Sigmoid colon (tissue), 7 donors: ENCODE measurements at regions of chr16 and their contacts with region 1.

Region 1: DNA sequence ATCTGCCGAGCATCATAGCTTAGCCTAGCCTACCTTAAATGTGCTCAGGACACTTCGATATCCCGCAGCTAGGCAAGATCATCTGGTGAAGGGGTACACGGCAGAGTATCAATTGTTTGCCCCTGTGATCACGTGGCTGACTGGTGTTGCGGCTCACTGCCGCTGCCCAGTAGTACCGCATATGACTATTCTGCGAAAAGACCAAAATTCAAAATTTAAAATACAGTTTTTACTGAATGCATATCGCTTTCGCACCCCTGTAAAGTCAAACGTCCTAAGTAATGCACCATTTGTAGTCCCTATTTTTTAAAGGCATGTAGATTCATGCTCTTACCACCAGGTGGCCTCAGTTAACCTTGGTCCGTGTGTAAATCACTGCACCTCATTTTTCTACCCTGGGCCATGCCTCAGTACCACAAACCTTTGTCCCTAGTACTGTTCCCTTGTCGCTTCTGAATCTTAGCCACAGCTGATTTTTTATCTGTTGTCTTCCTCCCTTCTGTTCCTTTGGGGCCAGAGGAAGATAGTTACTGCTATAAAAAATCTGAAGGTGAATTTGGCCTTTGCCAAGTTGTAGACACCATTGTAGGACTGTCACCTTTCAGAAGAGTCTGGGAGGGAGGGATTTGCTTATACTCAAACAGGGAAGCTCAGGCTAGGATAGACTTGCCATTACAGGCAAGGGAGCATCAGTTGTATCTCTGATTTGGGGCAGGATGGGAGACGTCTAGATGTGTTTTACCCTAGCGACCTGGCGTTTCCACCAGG is 34.4 kb downstream of the WWP2 start:
- DNase-seq: peak; percentile 69
- H3K4me3 ChIP-seq: peak overlapping the region in 2 of 4 donors; percentile 20 to 25
- H3K27ac ChIP-seq: no peak overlapping the region
- H3K4me1 ChIP-seq: peaks cover 0 to 11% (median 5%) of the 10 kb centered on the region in 4 donors
- H3K27me3 ChIP-seq: no peaks in the 10 kb centered on the region
- CTCF ChIP-seq: peak; percentile 76 to 94 (median 89)
- EP300 ChIP-seq: no peak
- POLR2A ChIP-seq: no peak

Region 2: DNA sequence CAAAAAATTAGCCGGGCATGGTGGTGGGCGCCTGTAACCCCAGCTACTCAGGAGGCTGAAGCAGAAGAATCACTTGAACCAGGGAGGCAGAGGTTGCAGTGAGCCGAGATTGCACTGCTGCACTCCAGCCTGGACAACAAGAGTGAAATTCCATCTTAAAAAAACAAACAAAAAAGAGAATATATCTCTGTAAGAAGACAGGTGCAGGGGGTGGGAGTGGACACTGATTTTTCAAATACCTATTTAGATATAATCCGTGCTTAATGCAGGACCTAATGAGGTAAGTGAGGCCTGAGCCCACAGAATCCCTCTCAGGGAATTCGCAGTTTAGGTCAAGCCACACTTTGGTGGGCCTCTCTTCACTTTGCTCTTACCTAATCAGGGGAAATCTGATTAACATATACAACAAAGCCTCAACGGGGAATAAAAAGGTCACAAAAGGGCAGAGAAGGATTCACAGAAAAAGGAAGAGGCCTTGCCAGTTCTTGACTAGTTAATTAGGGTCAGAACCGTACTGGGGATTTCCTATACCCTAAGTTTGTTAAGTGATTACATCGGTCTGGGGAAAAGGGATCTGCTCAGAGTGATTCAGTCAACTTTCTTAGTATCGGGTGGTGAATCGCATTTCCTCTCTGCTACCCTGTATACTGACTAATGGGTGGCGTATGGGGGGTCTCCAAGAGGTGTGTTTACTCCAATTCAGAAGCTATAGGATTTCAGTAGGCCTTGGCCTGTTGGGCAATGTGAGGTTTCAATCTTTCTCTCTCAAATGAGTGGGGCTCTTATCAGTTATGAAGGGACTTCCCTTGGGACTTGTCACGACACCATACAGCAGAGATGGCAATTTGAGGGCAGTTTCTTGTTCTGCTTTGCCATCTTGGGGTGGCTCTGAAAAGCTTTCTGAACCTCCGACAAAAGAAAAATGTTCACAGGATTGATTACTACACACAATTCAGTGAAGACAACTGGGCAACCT is 232.6 kb before region 1 on chr16:
- intact Hi-C with region 1: no loop called
- DNase-seq: no peak
- H3K4me3 ChIP-seq: peak overlapping the region in 1 of 4 donors; percentile 96
- H3K27ac ChIP-seq: peak overlapping the region in 3 of 4 donors; percentile 98 to 99 (median 99)
- H3K4me1 ChIP-seq: peaks cover 0 to 32% (median 27%) of the 10 kb centered on the region in 4 donors
- H3K27me3 ChIP-seq: no peaks in the 10 kb centered on the region
- CTCF ChIP-seq: no peak
- EP300 ChIP-seq: no peak
- POLR2A ChIP-seq: no peak

Region 3: DNA sequence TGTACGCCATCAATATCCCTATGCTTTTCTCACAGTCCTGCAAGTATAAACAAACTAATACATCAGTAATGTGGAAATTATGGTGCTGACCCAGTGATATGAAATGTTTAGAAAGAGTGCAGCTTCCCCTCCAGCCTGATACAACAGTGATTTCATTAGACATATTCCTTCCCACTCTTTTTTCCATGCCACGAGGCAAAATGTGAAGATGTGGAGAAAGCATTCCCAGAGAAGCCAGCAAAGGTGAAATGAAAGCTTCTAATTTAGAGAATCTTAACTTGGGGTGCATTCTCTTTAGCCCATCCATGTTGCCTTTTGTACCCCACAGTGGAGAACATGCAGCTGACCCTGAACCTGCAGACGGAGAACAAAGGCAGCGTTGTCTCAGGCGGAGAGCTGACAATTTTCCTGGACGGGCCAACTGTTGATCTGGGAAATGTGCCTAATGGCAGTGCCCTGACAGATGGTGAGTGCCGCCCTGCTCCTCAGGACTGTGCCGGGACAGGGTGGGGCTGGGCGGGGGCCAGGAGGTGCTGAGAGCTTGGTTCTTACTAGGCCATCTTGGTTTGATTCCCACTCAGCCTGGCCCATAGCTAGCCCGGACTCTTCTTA is 43.4 kb after region 1 on chr16:
- intact Hi-C with region 1: loop called (anchors 5 kb)
- DNase-seq: no peak
- H3K4me3 ChIP-seq: no peak overlapping the region
- H3K27ac ChIP-seq: peak overlapping the region in 1 of 4 donors; percentile 33
- H3K4me1 ChIP-seq: peaks cover 0 to 18% (median 4%) of the 10 kb centered on the region in 4 donors
- H3K27me3 ChIP-seq: no peaks in the 10 kb centered on the region
- CTCF ChIP-seq: no peak
- EP300 ChIP-seq: no peak
- POLR2A ChIP-seq: no peak

Region 4: GRCh38 chr16:69861292-69862030 is 64.9 kb after region 1 on chr16:
- intact Hi-C with region 1: loop called (anchors 2 kb)
- DNase-seq: peak; percentile 82
- H3K4me3 ChIP-seq: peak overlapping the region in 3 of 4 donors; percentile 22 to 34 (median 24)
- H3K27ac ChIP-seq: peak overlapping the region; percentile 66 to 86 (median 74)
- H3K4me1 ChIP-seq: peaks cover 0 to 40% (median 24%) of the 10 kb centered on the region in 4 donors
- H3K27me3 ChIP-seq: no peaks in the 10 kb centered on the region
- CTCF ChIP-seq: no peak
- EP300 ChIP-seq: no peak
- POLR2A ChIP-seq: no peak

Region 5: DNA sequence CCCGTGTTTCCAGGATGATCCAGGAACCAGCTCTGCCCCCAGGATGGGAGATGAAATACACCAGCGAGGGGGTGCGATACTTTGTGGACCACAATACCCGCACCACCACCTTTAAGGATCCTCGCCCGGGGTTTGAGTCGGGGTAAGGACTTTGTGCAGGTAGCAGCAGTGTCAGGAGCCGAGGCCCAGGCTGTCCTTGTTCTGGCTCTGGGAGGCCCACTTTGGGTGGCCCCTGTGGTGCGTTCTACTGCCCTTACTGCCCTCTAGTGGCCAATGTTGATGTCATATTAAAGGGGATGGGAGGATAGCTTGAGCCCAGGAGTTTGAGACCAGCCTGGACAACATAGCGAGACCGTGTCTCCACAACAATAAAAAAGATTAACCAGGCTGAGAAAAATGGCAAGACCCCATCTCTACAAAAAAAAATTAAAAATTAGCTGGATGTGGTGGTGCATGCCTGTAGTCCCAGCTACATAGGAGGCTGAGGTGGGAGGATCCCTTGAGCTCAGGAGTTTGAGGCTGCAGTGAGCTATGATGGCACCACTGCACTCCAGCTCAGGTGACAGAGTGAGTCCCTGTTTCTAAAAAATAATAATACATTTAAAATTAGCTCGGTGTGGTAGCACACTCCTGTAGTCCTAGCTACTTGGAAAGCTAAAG is 133.7 kb after region 1 on chr16:
- intact Hi-C with region 1: loop called (anchors 1 kb)
- DNase-seq: no peak
- H3K4me3 ChIP-seq: no peak overlapping the region
- H3K27ac ChIP-seq: no peak overlapping the region
- H3K4me1 ChIP-seq: peaks cover 0 to 21% (median 10%) of the 10 kb centered on the region in 4 donors
- H3K27me3 ChIP-seq: no peaks in the 10 kb centered on the region
- CTCF ChIP-seq: peak; percentile 43 to 79 (median 69)
- EP300 ChIP-seq: no peak
- POLR2A ChIP-seq: no peak